ENCODE measurements at regions of chr22 and their contacts with region 1.

Region 1: GRCh38 chr22:30876915-30877553 is 91.5 kb downstream of the MORC2 start:
- DNase-seq: peak; percentile 53
- ATAC-seq: peak; percentile 58 to 61

Region 2: GRCh38 chr22:30777587-30777986 is 99.4 kb before region 1 on chr22:
- intact Hi-C with region 1: loop called in 1 of 2 experiments (anchors 10 kb)
- DNase-seq: no peak
- ATAC-seq: no peak

Region 3: GRCh38 chr22:30802202-30803166 is 74.5 kb before region 1 on chr22:
- intact Hi-C with region 1: loop called in 1 of 2 experiments (anchors 10 kb)
- DNase-seq: peak; percentile 90
- ATAC-seq: peak; percentile 100

Region 4: GRCh38 chr22:31278622-31279326 is 401.7 kb after region 1 on chr22:
- intact Hi-C with region 1: no loop called
- DNase-seq: no peak
- ATAC-seq: peak in 1 of 2 donors; percentile 32

Measured in left cardiac atrium (tissue), 4 donors.